Mammary epithelial cell (primary cell): ENCODE measurements at regions of chr12 and their contacts with region 1.

Region 1: GRCh38 chr12:64181504-64182291 is 40.4 kb downstream of the KICS2 start:
- DNase-seq: peak; percentile 98
- H3K4me3 ChIP-seq: no peak overlapping the region
- H3K27ac ChIP-seq: peak overlapping the region; percentile 83
- H3K4me1 ChIP-seq: peaks cover 41% of the 10 kb centered on the region
- H3K27me3 ChIP-seq: no peaks in the 10 kb centered on the region
- CTCF ChIP-seq: peak; percentile 59 to 69

Region 2: GRCh38 chr12:63917864-63918799 is 263.6 kb before region 1 on chr12:
- CTCF ChIA-PET with region 1: no interaction called
- dilution Hi-C with region 1: no loop called
- in situ Hi-C with region 1: no loop called
- intact Hi-C with region 1: loop called (anchors 1 kb)
- DNase-seq: peak; percentile 95
- H3K4me3 ChIP-seq: no peak overlapping the region
- H3K27ac ChIP-seq: peak overlapping the region; percentile 98
- H3K4me1 ChIP-seq: peaks cover 76% of the 10 kb centered on the region
- H3K27me3 ChIP-seq: no peaks in the 10 kb centered on the region
- CTCF ChIP-seq: no peak

Region 3: GRCh38 chr12:63994704-63995103 is 187.0 kb before region 1 on chr12:
- CTCF ChIA-PET with region 1: no interaction called
- dilution Hi-C with region 1: no loop called
- in situ Hi-C with region 1: no loop called
- intact Hi-C with region 1: loop called (anchors 5 kb)
- DNase-seq: no peak
- H3K4me3 ChIP-seq: no peak overlapping the region
- H3K27ac ChIP-seq: no peak overlapping the region
- H3K4me1 ChIP-seq: peaks cover 55% of the 10 kb centered on the region
- H3K27me3 ChIP-seq: no peaks in the 10 kb centered on the region
- CTCF ChIP-seq: no peak

Region 4: DNA sequence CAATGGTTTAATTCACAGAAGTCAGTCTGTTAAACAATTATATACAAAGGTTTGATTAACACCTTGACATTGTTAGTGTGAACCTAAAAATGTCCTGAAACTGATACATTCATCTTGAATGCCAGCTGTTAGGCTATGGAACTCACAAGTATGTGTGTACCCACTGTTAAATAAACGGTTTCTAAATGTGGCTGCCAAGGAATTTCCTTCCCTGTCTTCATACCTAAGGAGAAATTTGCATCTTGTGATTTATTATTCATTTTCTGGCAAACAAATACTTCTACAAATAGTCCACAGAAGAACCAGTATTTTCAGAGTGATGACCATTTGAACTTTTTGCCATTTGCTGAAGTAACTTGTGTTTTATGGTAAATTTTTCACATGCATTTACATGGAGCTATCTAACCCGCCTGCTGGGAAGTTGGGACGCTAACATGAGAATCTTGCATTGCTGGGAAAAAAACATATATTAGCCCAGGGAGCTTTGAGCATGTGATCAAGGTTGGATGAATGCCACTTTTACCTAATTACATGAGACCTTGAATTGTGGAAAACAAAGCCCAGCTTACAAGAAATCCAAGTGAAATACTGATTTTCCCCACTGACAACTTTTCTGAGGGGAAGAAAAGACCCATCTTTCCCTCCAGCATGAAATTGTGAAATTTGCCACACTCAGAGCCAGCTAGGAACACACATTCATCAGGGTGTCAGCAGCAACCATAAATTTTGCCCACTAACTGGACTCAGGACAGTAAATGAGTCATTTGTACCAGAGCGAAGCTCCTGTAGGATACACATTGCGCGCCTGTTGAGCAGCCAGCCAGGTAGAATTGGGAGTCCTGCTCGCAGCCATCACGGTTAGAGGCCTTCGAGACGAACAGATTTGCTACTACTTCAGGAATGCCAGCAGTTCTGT is 77.6 kb before region 1 on chr12:
- CTCF ChIA-PET with region 1: no interaction called
- dilution Hi-C with region 1: no loop called
- in situ Hi-C with region 1: no loop called
- intact Hi-C with region 1: loop called (anchors 1 kb)
- DNase-seq: peak; percentile 93
- H3K4me3 ChIP-seq: no peak overlapping the region
- H3K27ac ChIP-seq: peak overlapping the region; percentile 73
- H3K4me1 ChIP-seq: peaks cover 56% of the 10 kb centered on the region
- H3K27me3 ChIP-seq: no peaks in the 10 kb centered on the region
- CTCF ChIP-seq: no peak

Region 5: DNA sequence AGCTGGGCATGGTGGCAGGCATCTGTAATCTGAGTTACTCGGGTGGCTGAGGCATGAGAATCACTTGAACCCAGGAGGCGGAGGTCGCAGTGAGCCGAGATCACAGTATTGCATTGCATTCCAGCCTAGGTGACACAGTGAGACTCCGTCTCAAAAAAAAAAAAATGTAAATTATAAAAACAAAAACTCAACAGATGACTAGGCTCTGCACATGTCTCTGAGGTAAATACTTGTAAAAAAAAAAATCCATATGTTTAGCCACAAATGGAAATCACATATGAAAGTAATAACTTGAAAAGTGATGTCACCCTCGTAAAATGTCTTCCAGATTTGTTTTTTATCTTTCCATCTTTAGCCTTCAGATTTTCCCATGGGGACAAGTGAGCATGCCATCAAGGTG is 44.6 kb before region 1 on chr12:
- CTCF ChIA-PET with region 1: no interaction called
- dilution Hi-C with region 1: no loop called
- in situ Hi-C with region 1: no loop called
- intact Hi-C with region 1: no loop called
- DNase-seq: no peak
- H3K4me3 ChIP-seq: no peak overlapping the region
- H3K27ac ChIP-seq: no peak overlapping the region
- H3K4me1 ChIP-seq: no peaks in the 10 kb centered on the region
- H3K27me3 ChIP-seq: no peaks in the 10 kb centered on the region
- CTCF ChIP-seq: no peak

Region 6: GRCh38 chr12:64160711-64161060 is 21.0 kb before region 1 on chr12:
- CTCF ChIA-PET with region 1: no interaction called
- dilution Hi-C with region 1: no loop called
- in situ Hi-C with region 1: no loop called
- intact Hi-C with region 1: loop called (anchors 1 kb)
- DNase-seq: peak; percentile 42
- H3K4me3 ChIP-seq: no peak overlapping the region
- H3K27ac ChIP-seq: peak overlapping the region; percentile 64
- H3K4me1 ChIP-seq: peaks cover 15% of the 10 kb centered on the region
- H3K27me3 ChIP-seq: no peaks in the 10 kb centered on the region
- CTCF ChIP-seq: no peak

Region 7: DNA sequence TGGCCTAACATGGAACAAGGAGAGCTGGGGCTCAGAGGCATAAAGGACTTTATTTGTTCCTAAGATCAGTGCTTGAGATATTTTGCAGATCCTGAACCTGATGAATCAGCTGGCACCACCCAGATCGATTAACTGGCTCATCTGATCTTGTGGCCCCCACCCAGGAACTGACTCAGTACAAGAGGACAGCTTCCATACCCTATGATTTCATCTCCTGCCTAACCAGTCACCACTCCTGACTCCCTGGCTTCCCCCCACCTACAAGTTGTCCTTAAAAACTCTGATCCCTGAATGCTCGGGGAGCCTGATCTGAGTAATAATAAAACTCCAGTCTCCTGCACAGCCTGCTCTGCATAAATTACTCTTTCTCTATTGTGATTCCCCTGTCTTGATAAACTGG is 203.8 kb after region 1 on chr12:
- CTCF ChIA-PET with region 1: no interaction called
- dilution Hi-C with region 1: no loop called
- in situ Hi-C with region 1: no loop called
- intact Hi-C with region 1: no loop called
- DNase-seq: peak; percentile 82
- H3K4me3 ChIP-seq: no peak overlapping the region
- H3K27ac ChIP-seq: no peak overlapping the region
- H3K4me1 ChIP-seq: peaks cover 18% of the 10 kb centered on the region
- H3K27me3 ChIP-seq: no peaks in the 10 kb centered on the region
- CTCF ChIP-seq: no peak